Ascending aorta (tissue), 2 donors: ENCODE measurements at regions of chr6 and their contacts with region 1.

Region 1: GRCh38 chr6:37289931-37290330 is 32.0 kb upstream of the TMEM217 start:
- DNase-seq: no peak
- H3K4me3 ChIP-seq: no peak overlapping the region
- H3K27ac ChIP-seq: no peak overlapping the region
- H3K4me1 ChIP-seq: peaks cover 0 to under 1% of the 10 kb centered on the region in 2 donors
- H3K27me3 ChIP-seq: no peaks in the 10 kb centered on the region
- CTCF ChIP-seq: no peak

Region 2: GRCh38 chr6:37305841-37306425 is 16.0 kb after region 1 on chr6:
- intact Hi-C with region 1: loop called (anchors 1 kb)
- DNase-seq: no peak
- H3K4me3 ChIP-seq: no peak overlapping the region
- H3K27ac ChIP-seq: no peak overlapping the region
- H3K4me1 ChIP-seq: peaks cover 2 to 17% of the 10 kb centered on the region in 2 donors
- H3K27me3 ChIP-seq: no peaks in the 10 kb centered on the region
- CTCF ChIP-seq: no peak